ENCODE measurements at regions of chr15 and their contacts with region 1.

Region 1: GRCh38 chr15:41989934-41990605 is 17.7 kb upstream of the EHD4 start:
- DNase-seq: no peak
- H3K4me3 ChIP-seq: no peak overlapping the region
- H3K27ac ChIP-seq: no peak overlapping the region
- H3K4me1 ChIP-seq: no peaks in the 10 kb centered on the region
- H3K27me3 ChIP-seq: no peaks in the 10 kb centered on the region
- CTCF ChIP-seq: no peak
- POLR2A ChIP-seq: no peak

Region 2: DNA sequence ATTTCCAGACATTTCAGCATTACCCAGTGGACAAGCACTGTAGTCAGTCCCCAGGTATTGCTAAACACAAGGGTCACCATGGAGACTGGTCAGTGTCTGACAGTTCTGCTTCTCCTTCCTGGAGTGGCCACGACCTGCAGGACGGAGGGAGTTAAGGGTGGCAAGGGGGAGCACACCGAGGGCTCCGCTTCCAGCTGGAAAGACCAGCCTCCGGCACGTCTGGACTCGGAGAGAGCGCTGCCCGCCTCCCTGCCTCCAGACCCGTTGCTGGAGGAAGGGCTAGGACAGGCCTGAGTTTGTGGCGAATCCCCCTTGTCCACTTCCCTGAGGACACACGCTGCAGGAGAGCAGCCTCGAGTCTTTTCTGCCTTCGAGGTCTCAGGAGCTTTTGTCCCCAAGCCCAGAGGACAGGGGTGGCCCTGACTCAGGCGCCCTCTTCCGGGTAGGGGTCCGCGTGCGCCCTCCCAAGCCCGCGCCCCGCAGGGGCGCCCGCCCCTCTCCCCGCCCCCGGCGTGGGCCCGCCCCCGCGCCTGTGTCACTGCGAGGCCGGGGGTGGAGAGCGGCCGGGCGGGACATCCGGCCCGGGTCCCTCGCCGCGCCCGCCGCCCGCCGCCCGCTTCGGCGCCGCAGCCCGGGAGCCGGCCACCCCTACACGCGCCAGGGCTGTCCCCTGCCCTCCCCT is 1519.5 kb before region 1 on chr15 and contains the start of gene CHST14:
- intact Hi-C with region 1: no loop called
- DNase-seq: peak; percentile 43
- H3K4me3 ChIP-seq: peak within 1 kb of the TSS; percentile 85 to 88
- H3K27ac ChIP-seq: peak within 1 kb of the TSS; percentile 45 to 80
- H3K4me1 ChIP-seq: peaks cover 18% of the 10 kb centered on the region
- H3K27me3 ChIP-seq: no peaks in the 10 kb centered on the region
- CTCF ChIP-seq: no peak
- POLR2A ChIP-seq: no peak
- total RNA-seq, gene CHST14: 5.4 to 13.0 TPM

Region 3: DNA sequence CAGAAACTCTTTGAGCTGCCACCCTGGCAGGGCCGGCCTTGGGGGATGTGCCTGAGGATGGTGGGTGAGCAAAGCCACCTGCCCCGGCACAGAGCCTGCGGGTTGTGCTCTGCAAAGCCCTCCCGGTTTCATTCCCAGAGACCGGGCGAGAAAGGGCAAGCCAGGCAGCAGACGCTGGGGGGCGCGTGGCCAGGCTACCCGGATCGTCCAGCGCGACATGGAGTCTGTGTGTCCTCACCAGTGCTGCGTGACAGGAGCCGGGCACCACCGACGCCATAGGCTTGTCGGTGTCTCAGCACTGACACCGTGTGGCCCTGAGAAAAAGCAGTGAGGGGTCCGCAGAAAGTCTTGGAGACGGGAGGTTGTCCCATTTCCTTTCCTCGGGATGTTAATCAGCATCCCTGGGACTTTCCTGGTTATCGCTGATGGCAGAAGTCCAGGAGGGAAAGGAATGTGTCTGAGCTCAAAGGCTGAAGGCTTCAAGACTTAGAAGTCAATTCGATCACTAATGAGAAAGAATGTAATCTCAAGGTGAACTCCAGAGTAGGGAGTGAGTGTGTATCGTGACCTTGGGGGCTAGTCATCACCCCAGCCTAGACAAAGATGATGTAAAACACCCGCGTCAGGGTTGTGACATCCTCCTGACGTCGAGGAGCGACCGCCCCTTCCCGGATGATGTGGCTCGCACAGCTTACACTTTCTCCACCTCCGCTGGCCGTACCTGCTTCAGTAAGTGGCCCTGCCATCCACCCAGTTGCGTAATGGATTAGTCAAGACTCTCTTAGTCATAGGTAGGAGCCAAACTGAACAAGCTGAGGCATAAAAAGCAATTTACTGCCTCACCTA is 67.1 kb after region 1 on chr15:
- intact Hi-C with region 1: loop called (anchors 5 kb)
- DNase-seq: peak; percentile 90
- H3K4me3 ChIP-seq: peak overlapping the region; percentile 24 to 30
- H3K27ac ChIP-seq: peak overlapping the region in 1 of 2 donors; percentile 57
- H3K4me1 ChIP-seq: peaks cover 3% of the 10 kb centered on the region
- H3K27me3 ChIP-seq: no peaks in the 10 kb centered on the region
- CTCF ChIP-seq: peak; percentile 29 to 46 (median 39)
- POLR2A ChIP-seq: no peak

Measured in testis (tissue), 5 donors.